ENCODE measurements at regions of chr1 and their contacts with region 1.

Region 1: DNA sequence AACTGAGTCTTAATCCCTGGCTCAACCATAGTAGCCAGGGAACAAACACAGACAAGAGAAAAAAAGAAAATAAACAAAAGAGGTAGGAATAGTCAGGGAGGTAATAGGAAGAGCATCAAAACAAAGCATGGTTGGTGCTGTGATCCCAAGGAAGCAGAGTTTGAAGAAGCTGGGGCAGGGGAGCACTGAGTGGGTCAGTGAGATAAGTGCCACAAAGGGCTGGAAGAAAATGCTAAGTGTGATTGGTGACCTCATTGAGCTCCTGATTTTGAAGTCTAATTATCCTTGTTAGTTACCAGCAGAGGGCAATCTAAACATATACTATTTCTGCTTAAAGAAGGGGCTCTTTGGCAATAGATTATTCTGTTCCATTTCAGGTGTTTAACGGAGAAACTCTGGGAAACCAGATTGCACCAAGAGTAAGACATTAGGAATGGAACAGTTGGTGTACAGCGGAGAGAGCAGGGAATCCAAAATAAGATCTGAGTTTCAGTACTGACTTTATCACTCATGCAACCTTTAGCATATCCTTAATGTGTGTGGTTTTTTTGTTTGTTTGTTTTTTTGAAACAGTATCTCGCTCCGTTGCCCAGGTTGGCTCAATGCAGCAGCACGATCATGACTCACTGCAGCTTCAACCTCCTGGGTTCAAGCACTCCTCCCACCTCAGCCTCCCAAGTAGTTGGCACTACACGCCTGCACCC is 30.7 kb upstream of the KIAA1614 start:
- DNase-seq: peak in 2 of 4 donors; percentile 37 to 49
- ATAC-seq: peak; percentile 83
- H3K4me3 ChIP-seq: no peak overlapping the region
- H3K27ac ChIP-seq: no peak overlapping the region
- H3K4me1 ChIP-seq: no peaks in the 10 kb centered on the region
- H3K27me3 ChIP-seq: no peaks in the 10 kb centered on the region
- CTCF ChIP-seq: peak; percentile 27 to 40

Region 2: GRCh38 chr1:181166377-181167196 is 284.6 kb after region 1 on chr1:
- intact Hi-C with region 1: loop called in 1 of 2 experiments (anchors 5 kb)
- DNase-seq: peak in 3 of 4 donors; percentile 50 to 83 (median 72)
- ATAC-seq: peak; percentile 100
- H3K4me3 ChIP-seq: no peak overlapping the region
- H3K27ac ChIP-seq: no peak overlapping the region
- H3K4me1 ChIP-seq: peaks cover 0 to 8% of the 10 kb centered on the region in 2 donors
- H3K27me3 ChIP-seq: no peaks in the 10 kb centered on the region
- CTCF ChIP-seq: peak; percentile 80 to 87